ENCODE measurements at regions of chr5 and their contacts with region 1.

Region 1: GRCh38 chr5:130112246-130112645 is 208.0 kb downstream of the CHSY3 start:
- DNase-seq: no peak
- H3K4me3 ChIP-seq: no peak overlapping the region
- CTCF ChIP-seq: no peak

Region 2: DNA sequence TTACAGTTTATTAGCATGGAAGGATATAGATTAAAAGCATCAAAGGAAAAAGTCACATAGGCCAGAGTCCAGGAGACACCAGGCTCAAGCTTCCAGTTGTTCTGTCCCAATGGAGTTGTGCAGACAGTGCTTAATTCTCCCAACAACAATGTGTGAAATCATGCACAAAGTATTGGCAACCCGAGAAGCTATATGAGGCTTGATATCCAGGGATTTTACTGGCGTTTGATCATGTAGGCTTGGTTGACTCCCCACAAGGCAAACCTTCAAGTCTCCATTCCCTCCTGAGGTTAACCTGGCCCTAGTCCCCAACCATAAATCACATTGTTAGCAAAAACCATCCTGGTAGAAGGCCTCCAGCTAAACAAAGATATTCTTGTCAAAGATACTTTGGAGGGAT is 510.7 kb before region 1 on chr5:
- in situ Hi-C with region 1: no loop called
- DNase-seq: peak; percentile 37
- H3K4me3 ChIP-seq: no peak overlapping the region
- CTCF ChIP-seq: no peak

Region 3: DNA sequence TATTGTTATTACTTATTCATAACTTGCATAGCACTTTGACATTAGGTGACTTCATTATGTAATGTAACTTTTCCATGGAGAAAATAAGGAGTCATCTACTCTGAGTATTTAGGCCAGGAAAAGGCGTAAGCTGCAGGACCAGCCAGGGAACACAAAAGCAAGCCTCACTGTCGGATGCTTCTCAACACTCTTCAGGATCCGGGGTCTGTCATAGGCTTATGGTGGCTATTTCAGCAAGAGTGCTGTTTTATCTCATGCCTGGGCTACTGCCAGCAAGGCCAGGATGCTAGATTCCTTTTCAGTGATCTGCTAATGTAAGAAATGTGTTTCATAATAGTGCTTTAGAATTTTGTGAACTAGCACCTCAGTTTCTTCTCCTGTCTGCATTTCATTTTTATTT is 45.6 kb before region 1 on chr5:
- in situ Hi-C with region 1: no loop called
- DNase-seq: peak; percentile 3
- H3K4me3 ChIP-seq: no peak overlapping the region
- CTCF ChIP-seq: no peak

Region 4: DNA sequence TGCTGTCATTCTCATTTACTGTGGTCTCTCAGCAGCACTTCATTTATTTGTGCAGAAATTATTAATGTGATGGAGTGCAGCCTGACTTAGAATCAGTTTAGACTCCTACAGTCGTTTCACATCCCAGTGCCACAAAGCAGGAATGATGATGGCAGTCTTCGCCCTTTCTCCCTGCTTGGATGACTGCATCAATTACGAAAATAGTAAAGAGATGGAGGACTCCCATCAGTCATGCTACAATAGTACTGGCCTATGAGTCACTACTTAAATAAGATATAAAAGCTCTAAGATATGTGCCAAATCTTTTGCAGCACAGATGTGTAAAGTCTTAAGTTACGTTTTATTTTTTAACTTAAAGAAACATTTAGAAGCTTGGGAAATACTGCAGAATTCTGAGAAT is 56.0 kb after region 1 on chr5:
- in situ Hi-C with region 1: no loop called
- DNase-seq: peak; percentile 12
- H3K4me3 ChIP-seq: no peak overlapping the region
- CTCF ChIP-seq: no peak

Region 5: GRCh38 chr5:130198925-130199324 is 86.7 kb after region 1 on chr5:
- in situ Hi-C with region 1: no loop called
- DNase-seq: no peak
- H3K4me3 ChIP-seq: no peak overlapping the region
- CTCF ChIP-seq: peak; percentile 28

Region 6: DNA sequence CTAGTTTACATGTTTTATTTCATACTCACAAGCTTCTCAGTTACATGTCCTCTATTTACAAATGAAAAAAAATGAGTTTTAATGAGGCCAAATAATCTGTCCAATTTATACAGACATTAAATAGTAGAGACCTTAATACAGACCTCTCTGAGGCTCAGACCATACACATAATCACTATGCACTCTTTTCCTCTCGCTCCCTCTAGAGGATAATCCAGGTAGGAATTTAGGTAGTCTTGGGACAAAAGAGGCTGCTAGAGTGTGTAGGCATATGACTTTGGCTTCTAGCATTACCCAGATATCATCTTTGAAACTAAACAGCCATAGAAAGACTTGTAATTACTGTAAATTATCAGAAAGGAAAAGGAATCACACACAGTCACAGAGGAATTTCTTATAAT is 608.1 kb after region 1 on chr5:
- in situ Hi-C with region 1: loop called (anchors 10 kb)
- DNase-seq: peak; percentile 55
- H3K4me3 ChIP-seq: no peak overlapping the region
- CTCF ChIP-seq: peak; percentile 74

Measured in astrocyte of the cerebellum (primary cell).